CD8-positive, alpha-beta memory T cell (primary cell): ENCODE measurements at regions of chr20 and their contacts with region 1.

Region 1: GRCh38 chr20:31547017-31547675 is 32.9 kb downstream of the HM13 start:
- DNase-seq: peak; percentile 65 to 86 (median 80)
- H3K4me3 ChIP-seq: peak overlapping the region; percentile 77
- H3K4me3 Mint-ChIP-seq: peak overlapping the region; percentile 87 to 98 (median 95)
- H3K27ac ChIP-seq: peak overlapping the region; percentile 91
- H3K27ac Mint-ChIP-seq: peak overlapping the region; percentile 89 to 100 (median 99)
- H3K4me1 ChIP-seq: peaks cover 9% of the 10 kb centered on the region
- H3K4me1 Mint-ChIP-seq: peaks cover 23 to 34% (median 32%) of the 10 kb centered on the region in 3 donors
- H3K27me3 ChIP-seq: no peaks in the 10 kb centered on the region
- H3K27me3 Mint-ChIP-seq: no peaks in the 10 kb centered on the region

Region 2: DNA sequence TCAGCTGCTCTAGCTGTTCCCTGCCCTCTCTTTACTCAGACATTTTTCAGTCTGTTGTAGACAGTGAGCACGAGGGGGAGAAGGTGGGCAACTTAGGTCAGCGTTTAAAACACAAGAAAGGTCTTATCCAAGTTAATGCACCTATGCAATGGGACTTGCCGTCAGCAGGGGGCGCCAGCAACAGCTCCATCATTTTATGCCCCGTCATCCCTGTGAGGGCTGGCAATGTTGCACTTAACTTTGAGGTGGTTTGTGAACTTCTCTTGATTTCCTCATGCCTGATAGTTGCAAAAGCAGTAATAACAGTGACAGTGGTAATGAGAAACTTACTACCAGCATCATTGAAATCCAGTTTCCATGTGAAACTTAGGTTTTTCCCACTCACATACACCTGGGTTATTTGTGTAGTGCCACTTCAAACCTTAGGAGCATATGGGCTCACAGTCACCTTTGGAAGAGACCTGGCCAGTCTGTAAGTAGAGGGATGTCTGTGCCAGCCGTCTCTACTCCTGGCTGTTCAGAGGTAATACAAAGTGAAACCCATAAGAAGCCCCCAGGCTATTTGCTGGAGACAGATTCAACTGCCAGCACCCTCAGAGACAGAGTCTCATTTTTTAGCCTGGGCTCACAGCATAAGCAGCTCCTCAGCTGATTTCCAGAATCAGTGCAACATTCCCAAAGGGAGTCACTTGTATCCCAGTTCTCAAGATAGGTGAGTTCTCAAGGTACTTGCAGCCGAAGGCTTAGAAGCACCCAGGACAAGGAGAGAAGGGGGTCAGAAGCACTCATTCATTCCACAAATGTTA is 13.2 kb after region 1 on chr20:
- CTCF ChIA-PET with region 1: interaction called, 20 read pairs
- POLR2A ChIA-PET with region 1: no interaction called
- DNase-seq: peak; percentile 62 to 79 (median 69)
- H3K4me3 ChIP-seq: no peak overlapping the region
- H3K4me3 Mint-ChIP-seq: peak overlapping the region in 1 of 7 donors; percentile 16
- H3K27ac ChIP-seq: no peak overlapping the region
- H3K27ac Mint-ChIP-seq: peak overlapping the region in 5 of 8 donors; percentile 39 to 92 (median 58)
- H3K4me1 ChIP-seq: peaks cover 12% of the 10 kb centered on the region
- H3K4me1 Mint-ChIP-seq: peaks cover 6 to 7% (median 7%) of the 10 kb centered on the region in 3 donors
- H3K27me3 ChIP-seq: no peaks in the 10 kb centered on the region
- H3K27me3 Mint-ChIP-seq: no peaks in the 10 kb centered on the region